ENCODE measurements at regions of chr1 and their contacts with region 1.

Region 1: DNA sequence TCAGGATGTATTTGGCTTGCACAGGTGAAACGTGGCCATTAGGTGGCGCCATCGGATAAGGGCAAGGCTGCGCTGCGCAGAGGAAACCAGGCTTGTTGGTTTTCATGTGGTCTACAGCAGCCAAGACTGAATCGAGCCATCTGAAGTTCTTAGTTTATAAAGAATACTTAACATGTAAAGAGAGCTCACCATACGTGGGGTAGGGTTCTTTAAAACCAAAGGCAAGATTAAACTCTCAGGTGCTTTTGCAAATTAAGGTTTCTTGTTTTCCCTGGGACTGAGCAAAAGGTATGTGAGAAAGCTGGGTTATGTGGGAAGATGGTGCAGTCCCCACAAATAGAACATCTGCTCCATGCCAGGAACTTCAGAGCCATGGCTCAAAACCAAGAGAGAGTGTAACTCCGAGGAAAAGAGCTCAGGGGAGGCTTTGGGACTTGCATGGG is 9.3 kb downstream of the MASP2 start:
- DNase-seq: peak; percentile 92
- H3K4me3 Mint-ChIP-seq: no peak overlapping the region
- H3K27ac Mint-ChIP-seq: no peak overlapping the region
- H3K4me1 Mint-ChIP-seq: peaks cover 8% of the 10 kb centered on the region
- H3K27me3 Mint-ChIP-seq: peaks cover 5% of the 10 kb centered on the region

Region 2: DNA sequence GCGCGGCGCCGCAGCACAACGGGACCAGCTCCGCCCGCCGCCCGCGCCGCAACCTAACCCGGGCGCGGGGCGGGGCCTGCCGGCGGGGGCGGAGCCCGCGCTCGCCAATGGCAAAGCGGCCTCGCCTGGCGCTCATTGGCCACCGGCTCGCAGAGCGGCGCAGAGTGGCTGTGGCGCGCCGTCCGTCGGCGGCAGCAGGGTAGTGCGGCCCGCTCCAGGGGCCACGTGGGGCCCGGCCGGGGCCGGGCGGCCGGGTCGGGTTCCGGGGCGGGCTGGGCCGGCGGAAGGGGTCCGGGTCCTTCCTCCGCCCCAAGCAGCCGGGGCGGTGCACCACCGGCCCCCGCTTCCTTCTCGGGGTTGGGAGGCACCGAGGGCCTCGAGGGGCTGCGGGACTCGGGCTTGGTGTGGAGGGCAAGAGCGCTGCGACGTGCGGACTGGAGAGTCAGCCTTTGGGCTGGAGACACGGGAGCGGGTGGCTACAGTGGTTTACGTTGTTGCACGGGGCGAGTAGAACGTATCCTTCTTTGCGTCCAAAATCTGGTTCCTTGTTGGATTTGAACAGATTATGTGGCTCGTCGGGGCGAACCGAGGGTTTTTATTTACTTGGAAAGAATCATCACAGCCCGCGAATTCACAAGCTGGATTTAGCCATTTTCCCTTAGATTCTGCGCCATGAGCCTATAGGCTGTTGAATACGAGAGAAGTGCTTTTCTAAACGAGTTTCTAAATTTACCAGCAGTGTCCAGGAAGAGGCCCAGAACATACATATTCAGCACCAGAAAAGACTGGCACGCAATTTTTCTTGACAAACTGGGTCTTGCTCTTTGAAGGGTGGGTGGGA is 22.4 kb after region 1 on chr1 and contains the start of gene SRM:
- CTCF ChIA-PET with region 1: interaction called, 20 read pairs
- POLR2A ChIA-PET with region 1: no interaction called
- DNase-seq: peak; percentile 89
- H3K4me3 Mint-ChIP-seq: peak within 1 kb of the TSS; percentile 92
- H3K27ac Mint-ChIP-seq: peak within 1 kb of the TSS; percentile 93
- H3K4me1 Mint-ChIP-seq: peaks cover 44% of the 10 kb centered on the region
- H3K27me3 Mint-ChIP-seq: no peaks in the 10 kb centered on the region
- total RNA-seq, gene SRM: 88.1 to 93.8 TPM

Region 3: GRCh38 chr1:11245904-11246719 is 208.4 kb after region 1 on chr1:
- CTCF ChIA-PET with region 1: interaction called, 10 read pairs
- POLR2A ChIA-PET with region 1: no interaction called
- DNase-seq: no peak
- H3K4me3 Mint-ChIP-seq: no peak overlapping the region
- H3K27ac Mint-ChIP-seq: peak overlapping the region; percentile 43
- H3K4me1 Mint-ChIP-seq: peaks cover 10% of the 10 kb centered on the region
- H3K27me3 Mint-ChIP-seq: no peaks in the 10 kb centered on the region

Region 4: GRCh38 chr1:11634365-11635192 is 596.8 kb after region 1 on chr1:
- CTCF ChIA-PET with region 1: interaction called, 17 read pairs
- POLR2A ChIA-PET with region 1: no interaction called
- DNase-seq: no peak
- H3K4me3 Mint-ChIP-seq: no peak overlapping the region
- H3K27ac Mint-ChIP-seq: no peak overlapping the region
- H3K4me1 Mint-ChIP-seq: no peaks in the 10 kb centered on the region
- H3K27me3 Mint-ChIP-seq: peaks cover 4% of the 10 kb centered on the region

Region 5: DNA sequence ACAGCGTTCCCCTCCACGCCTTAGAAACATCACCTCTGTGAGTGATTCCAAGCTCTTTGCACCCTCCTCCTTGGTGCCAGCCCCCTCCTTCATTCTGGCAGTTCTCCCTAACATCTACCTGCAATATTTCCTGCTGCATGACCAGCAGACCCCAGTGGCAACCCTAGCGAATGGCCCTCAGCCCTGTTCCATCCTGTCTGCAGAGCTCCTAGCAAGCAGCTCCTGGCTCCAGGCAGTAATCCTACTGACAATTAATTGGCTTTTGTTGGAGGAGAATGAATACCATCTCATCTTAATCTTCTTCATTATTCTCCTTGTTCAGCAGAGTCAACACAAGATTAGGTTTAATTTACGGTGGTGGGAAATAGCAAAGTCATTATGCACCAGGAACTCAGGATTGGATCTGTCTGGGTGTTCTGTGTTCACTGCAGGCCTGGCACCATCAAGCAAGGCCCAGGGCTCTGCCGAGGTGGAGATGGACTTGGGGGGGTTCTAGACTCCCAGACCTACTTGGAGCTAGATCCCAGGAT is 604.1 kb after region 1 on chr1:
- CTCF ChIA-PET with region 1: interaction called, 18 read pairs
- POLR2A ChIA-PET with region 1: no interaction called
- DNase-seq: no peak
- H3K4me3 Mint-ChIP-seq: no peak overlapping the region
- H3K27ac Mint-ChIP-seq: no peak overlapping the region
- H3K4me1 Mint-ChIP-seq: no peaks in the 10 kb centered on the region
- H3K27me3 Mint-ChIP-seq: peaks cover 2% of the 10 kb centered on the region

Measured in activated CD4-positive, alpha-beta T cell treated with anti-CD3 and anti-CD28 coated beads, Interleukin-2, amount 10 ng/mL, durations not matched to agents 7 days and 5 days (primary cell).